Psoas muscle (tissue), 8 donors: ENCODE measurements at regions of chr11 and their contacts with region 1.

Region 1: GRCh38 chr11:117232092-117232878 is at the start of gene RNF214:
- DNase-seq: peak; percentile 82 to 88
- ATAC-seq: peak; percentile 90 to 93 (median 91)
- H3K4me3 ChIP-seq: peak within 1 kb of the TSS; percentile 98
- H3K27ac ChIP-seq: peak within 1 kb of the TSS; percentile 99
- H3K4me1 ChIP-seq: peaks cover 29% of the 10 kb centered on the region
- H3K27me3 ChIP-seq: no peaks in the 10 kb centered on the region
- CTCF ChIP-seq: peak; percentile 97
- total RNA-seq, gene RNF214: 31.0 to 39.4 (median 34.7) TPM

Region 2: GRCh38 chr11:116772443-116773202 is 459.7 kb before region 1 on chr11 and contains the start of gene BUD13:
- intact Hi-C with region 1: loop called in 1 of 2 experiments (anchors 5 kb)
- DNase-seq: peak; percentile 92 to 97
- ATAC-seq: peak; percentile 96 to 97 (median 96)
- H3K4me3 ChIP-seq: peak within 1 kb of the TSS; percentile 73
- H3K27ac ChIP-seq: peak within 1 kb of the TSS; percentile 89
- H3K4me1 ChIP-seq: peaks cover 18% of the 10 kb centered on the region
- H3K27me3 ChIP-seq: no peaks in the 10 kb centered on the region
- CTCF ChIP-seq: no peak
- total RNA-seq, gene BUD13: 8.6 to 11.4 (median 9.2) TPM

Region 3: GRCh38 chr11:116787786-116788486 is 444.3 kb before region 1 on chr11 and contains the start of gene ZPR1:
- intact Hi-C with region 1: loop called (anchors 2 to 5 kb)
- DNase-seq: peak; percentile 84 to 93
- ATAC-seq: peak; percentile 83 to 95 (median 89)
- H3K4me3 ChIP-seq: peak within 1 kb of the TSS; percentile 98
- H3K27ac ChIP-seq: peak within 1 kb of the TSS; percentile 87
- H3K4me1 ChIP-seq: peaks cover 10% of the 10 kb centered on the region
- H3K27me3 ChIP-seq: no peaks in the 10 kb centered on the region
- CTCF ChIP-seq: no peak
- total RNA-seq, gene ZPR1: 41.4 to 63.2 (median 56.1) TPM

Region 4: DNA sequence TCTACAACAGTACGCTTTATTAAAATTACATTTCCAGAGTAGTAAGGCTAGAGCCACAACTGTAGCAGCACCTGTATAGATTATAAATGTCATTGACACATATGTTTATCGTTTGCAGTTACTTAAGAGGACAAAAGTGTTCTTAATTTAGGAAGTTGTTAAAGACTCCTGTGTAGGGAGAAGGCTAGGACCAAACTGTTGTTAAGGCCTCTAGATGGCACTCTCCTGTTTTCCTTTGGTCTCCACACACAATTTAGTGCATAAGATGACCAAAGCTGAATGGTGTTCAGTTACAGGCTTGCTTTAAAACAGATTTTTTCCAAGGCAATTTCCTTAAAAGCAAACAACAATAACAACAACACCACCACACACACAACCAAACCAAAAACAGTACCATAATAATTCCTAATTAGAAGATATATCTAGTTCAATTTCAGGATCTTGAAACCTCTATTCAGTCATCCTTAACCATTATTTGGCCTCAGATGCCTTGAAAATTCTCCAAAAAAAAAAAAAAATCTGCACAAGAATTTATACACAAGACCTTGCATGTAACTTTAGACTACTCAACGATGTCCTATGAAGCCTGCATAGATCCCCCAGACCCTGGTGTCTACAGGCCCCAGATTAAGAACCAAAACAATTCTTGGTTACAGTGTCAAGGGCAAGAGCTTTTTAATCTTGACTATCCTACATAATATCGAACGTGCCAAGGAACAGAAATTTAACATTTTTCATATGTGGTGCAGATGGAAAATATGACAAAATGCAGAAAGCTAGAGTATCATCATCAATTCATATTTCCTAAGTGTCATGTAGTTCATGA is 352.3 kb before region 1 on chr11:
- intact Hi-C with region 1: loop called in 1 of 2 experiments (anchors 5 kb)
- DNase-seq: no peak
- ATAC-seq: peak; percentile 72 to 85 (median 78)
- H3K4me3 ChIP-seq: no peak overlapping the region
- H3K27ac ChIP-seq: no peak overlapping the region
- H3K4me1 ChIP-seq: peaks cover 14% of the 10 kb centered on the region
- H3K27me3 ChIP-seq: no peaks in the 10 kb centered on the region
- CTCF ChIP-seq: peak; percentile 68

Region 5: GRCh38 chr11:118084247-118084646 is 852.0 kb after region 1 on chr11:
- intact Hi-C with region 1: no loop called
- DNase-seq: peak in 1 of 2 donors; percentile 59
- ATAC-seq: peak; percentile 92 to 97 (median 95)
- H3K4me3 ChIP-seq: no peak overlapping the region
- H3K27ac ChIP-seq: peak overlapping the region; percentile 75
- H3K4me1 ChIP-seq: peaks cover 21% of the 10 kb centered on the region
- H3K27me3 ChIP-seq: no peaks in the 10 kb centered on the region
- CTCF ChIP-seq: no peak